Colonic mucosa (tissue), 4 donors: ENCODE measurements at regions of chr1 and their contacts with region 1.

Region 1: GRCh38 chr1:86470859-86471258 is 2.1 kb downstream of the CLCA1 start:
- DNase-seq: no peak
- H3K4me3 ChIP-seq: peak overlapping the region; percentile 5
- H3K27ac ChIP-seq: no peak overlapping the region
- H3K4me1 ChIP-seq: no peaks in the 10 kb centered on the region
- H3K27me3 ChIP-seq: no peaks in the 10 kb centered on the region
- CTCF ChIP-seq: no peak

Region 2: GRCh38 chr1:86687595-86687994 is 216.7 kb after region 1 on chr1:
- intact Hi-C with region 1: loop called (anchors 5 kb)
- DNase-seq: no peak
- H3K4me3 ChIP-seq: no peak overlapping the region
- H3K27ac ChIP-seq: no peak overlapping the region
- H3K4me1 ChIP-seq: no peaks in the 10 kb centered on the region
- H3K27me3 ChIP-seq: no peaks in the 10 kb centered on the region
- CTCF ChIP-seq: no peak

Region 3: DNA sequence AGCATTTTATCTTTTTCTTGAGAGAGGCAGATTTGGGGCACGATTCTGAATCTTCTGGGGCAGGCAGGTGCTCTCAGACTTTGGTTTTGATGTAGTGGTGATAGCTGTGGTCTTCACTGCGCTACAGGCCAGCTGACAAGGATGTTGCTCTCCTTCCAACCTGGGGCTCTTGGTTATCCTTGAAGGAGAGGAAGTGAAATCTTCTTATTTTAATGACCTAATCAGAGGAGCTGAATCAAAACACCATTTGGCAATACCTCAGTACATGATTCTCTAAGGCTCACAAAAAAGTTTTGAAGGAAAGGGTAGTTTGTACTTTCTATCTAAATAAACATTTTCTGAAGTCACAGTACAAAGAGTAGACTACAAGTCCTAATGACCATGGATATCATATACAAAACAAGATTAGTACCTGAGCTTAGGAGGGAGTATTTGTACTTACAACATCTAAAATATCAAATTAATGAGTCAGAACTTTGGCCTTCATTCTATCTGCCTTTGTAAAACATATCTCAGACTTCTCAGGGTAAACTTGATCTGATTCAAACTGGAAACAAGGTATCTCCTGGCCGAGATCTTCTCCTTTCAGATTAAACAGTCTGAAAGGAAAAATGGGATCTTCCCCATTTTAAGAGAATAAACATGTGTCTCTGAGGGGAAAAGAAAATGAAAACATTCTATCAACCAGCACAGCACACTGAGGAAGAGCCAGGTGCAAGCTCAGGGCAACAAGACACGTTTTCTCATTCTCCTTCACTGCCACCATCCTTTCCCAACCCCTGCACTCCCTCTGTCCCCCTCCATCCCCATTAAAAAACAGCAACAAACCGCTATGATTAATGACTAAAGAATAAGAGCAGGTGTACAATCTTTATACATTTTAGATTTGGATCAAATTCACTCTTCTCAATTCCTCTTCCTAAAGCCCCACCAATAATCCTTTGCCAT is 302.8 kb after region 1 on chr1:
- intact Hi-C with region 1: no loop called
- DNase-seq: no peak
- H3K4me3 ChIP-seq: no peak overlapping the region
- H3K27ac ChIP-seq: no peak overlapping the region
- H3K4me1 ChIP-seq: peaks cover 8% of the 10 kb centered on the region
- H3K27me3 ChIP-seq: no peaks in the 10 kb centered on the region
- CTCF ChIP-seq: no peak